IMR-90 (cell line): ENCODE measurements at regions of chr12 and their contacts with region 1.

Region 1: DNA sequence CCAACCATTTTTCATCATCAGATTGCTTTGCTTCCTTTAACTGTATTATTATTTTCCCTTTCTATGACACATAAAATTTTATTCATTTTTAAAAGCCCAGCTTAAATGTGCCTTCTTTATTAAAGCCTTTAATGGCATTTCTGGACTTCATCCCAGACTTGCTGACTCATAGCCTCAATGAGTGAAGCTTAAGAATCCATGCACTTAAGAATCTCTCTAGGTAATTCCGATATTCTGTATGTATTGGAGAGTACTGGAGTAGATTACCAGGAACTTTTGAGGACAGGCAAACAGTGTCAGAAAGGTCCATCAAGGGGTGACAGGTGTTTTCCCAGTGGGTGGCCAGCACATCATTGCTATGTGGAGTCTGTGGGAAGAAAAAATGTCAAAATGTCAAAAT is 107.9 kb downstream of the PTPRQ start:
- DNase-seq: peak; percentile 99
- ATAC-seq: peak; percentile 80
- H3K4me3 ChIP-seq: no peak overlapping the region
- H3K27ac ChIP-seq: peak overlapping the region; percentile 51; the same call in 1 of the 2 replicates
- H3K4me1 ChIP-seq: peaks cover 13% of the 10 kb centered on the region
- H3K27me3 ChIP-seq: no peaks in the 10 kb centered on the region
- CTCF ChIP-seq: no peak
- POLR2A ChIP-seq: no peak
- RAD21 ChIP-seq: no peak

Region 2: GRCh38 chr12:80580254-80580653 is 28.4 kb after region 1 on chr12:
- CTCF ChIA-PET with region 1: interaction called, 3 read pairs
- POLR2A ChIA-PET with region 1: no interaction called
- dilution Hi-C with region 1: no loop called
- in situ Hi-C with region 1: no loop called
- intact Hi-C with region 1: loop called (anchors 2 kb)
- DNase-seq: peak; percentile 97
- ATAC-seq: peak; percentile 94
- H3K4me3 ChIP-seq: no peak overlapping the region; the same call in 1 of the 2 replicates
- H3K27ac ChIP-seq: peak overlapping the region; percentile 100
- H3K4me1 ChIP-seq: peaks cover 15% of the 10 kb centered on the region
- H3K27me3 ChIP-seq: no peaks in the 10 kb centered on the region
- CTCF ChIP-seq: no peak
- POLR2A ChIP-seq: no peak
- RAD21 ChIP-seq: no peak

Region 3: DNA sequence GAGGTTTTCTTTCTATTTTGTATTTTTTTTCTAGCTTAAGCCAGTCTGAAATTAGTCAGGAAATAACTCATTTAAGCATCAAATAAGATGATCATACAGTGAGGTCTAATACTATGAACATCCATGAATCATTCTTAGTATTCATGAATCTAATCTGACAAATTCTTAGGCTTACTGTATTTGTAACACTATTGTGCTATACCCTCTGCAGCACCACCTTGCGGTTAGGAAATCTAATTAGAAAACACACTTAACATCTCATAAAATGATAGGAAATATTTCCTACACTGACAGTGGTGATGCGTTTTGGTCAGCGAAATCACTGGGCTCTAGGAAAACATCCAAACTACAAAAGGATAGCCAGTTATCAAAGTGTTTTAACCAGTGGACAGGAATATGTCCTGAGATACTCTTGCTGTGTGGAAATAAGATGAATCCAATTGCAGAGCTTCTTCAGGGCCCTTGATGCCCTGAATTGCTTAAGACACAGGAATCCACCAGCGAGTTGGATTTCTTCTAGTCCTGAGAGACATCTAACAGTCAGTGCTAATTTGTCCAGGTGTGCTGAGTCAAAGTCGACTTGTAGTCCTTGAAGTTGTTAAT is 46.2 kb after region 1 on chr12:
- CTCF ChIA-PET with region 1: interaction called, 3 read pairs
- POLR2A ChIA-PET with region 1: no interaction called
- dilution Hi-C with region 1: no loop called
- in situ Hi-C with region 1: no loop called
- intact Hi-C with region 1: loop called (anchors 5 kb)
- DNase-seq: peak; percentile 83
- ATAC-seq: peak; percentile 67
- H3K4me3 ChIP-seq: no peak overlapping the region
- H3K27ac ChIP-seq: no peak overlapping the region
- H3K4me1 ChIP-seq: peaks cover 11% of the 10 kb centered on the region; the same call in 1 of the 2 replicates
- H3K27me3 ChIP-seq: no peaks in the 10 kb centered on the region
- CTCF ChIP-seq: peak; percentile 63
- POLR2A ChIP-seq: no peak
- RAD21 ChIP-seq: peak; percentile 62